ENCODE measurements at regions of chr6 and their contacts with region 1.

Region 1: GRCh38 chr6:119313937-119314884 is 35.4 kb downstream of the MAN1A1 start:
- DNase-seq: peak; percentile 91
- ATAC-seq: peak; percentile 71
- H3K4me3 Mint-ChIP-seq: peak overlapping the region; percentile 70
- H3K27ac Mint-ChIP-seq: peak overlapping the region; percentile 97
- H3K4me1 Mint-ChIP-seq: peaks cover 86% of the 10 kb centered on the region
- H3K27me3 Mint-ChIP-seq: no peaks in the 10 kb centered on the region

Region 2: DNA sequence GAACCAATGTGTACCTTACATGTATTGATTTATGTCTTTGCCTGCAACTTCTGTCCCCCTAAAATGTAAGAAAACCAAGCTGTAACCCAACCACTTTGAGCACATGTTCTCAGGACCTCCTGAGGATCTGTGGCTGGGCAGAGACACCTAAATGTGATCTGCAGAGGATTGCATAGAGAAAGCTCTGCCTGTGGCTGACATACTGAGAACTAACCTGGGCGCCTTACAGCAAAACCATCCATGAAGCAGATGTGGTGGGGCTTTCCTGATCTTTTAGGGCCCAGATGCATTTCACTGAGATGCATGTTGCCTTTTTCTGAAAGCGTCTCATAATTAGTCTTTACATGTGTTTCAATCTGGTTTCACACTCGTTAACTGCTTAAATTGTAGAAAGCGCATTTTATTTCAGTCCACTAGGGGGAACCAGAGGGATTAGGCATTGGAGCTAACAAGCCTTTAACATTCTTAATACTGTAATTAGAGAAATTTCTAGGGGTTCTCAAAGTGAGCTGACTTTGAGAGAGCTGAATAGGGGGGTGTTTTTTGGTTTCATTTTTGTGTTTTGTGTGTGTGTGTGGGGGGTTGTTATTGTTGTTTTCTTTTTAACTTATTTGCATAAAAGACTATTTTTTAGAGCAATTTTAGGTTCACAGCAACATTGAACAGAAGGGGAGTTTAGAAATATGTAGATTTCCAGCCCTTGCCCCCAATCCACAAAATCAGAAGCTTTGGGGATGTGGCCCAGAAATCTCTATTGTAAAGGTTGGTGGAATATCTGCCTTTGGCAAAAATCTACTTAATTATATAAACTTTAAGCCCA is 184.9 kb before region 1 on chr6:
- CTCF ChIA-PET with region 1: interaction called, 15 read pairs
- DNase-seq: no peak
- ATAC-seq: peak; percentile 76
- H3K4me3 Mint-ChIP-seq: no peak overlapping the region
- H3K27ac Mint-ChIP-seq: no peak overlapping the region
- H3K4me1 Mint-ChIP-seq: peaks cover 8% of the 10 kb centered on the region
- H3K27me3 Mint-ChIP-seq: peaks cover 2% of the 10 kb centered on the region

Region 3: DNA sequence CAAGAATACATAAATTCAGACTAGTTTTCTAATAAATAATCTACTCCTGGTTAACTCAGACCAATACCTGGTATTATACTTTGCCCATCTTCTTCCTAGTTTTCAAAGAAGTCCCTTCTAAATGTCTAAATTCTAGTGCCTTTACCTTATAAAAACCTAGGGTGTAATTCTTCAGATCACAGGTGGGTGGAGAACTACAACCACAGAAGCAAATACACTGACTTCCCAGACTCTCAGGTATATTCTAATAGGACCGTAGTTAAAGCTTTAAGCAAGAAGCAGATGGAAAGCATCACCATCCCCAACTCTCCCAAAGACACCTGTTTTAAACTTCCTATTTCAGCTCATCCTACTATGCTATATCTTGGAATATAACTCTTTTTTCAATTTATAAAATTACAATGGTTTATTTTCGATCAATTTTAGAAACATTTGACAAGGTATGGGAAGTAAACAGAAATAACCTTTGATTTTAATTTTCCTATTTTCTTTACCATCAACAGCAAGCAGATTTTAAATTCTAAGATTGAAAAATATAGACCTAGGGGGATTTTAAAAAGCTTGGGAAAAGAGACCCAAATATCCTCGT is 19.6 kb after region 1 on chr6:
- CTCF ChIA-PET with region 1: interaction called, 18 read pairs
- DNase-seq: no peak
- ATAC-seq: peak; percentile 54
- H3K4me3 Mint-ChIP-seq: no peak overlapping the region
- H3K27ac Mint-ChIP-seq: no peak overlapping the region
- H3K4me1 Mint-ChIP-seq: peaks cover 76% of the 10 kb centered on the region
- H3K27me3 Mint-ChIP-seq: no peaks in the 10 kb centered on the region

Region 4: DNA sequence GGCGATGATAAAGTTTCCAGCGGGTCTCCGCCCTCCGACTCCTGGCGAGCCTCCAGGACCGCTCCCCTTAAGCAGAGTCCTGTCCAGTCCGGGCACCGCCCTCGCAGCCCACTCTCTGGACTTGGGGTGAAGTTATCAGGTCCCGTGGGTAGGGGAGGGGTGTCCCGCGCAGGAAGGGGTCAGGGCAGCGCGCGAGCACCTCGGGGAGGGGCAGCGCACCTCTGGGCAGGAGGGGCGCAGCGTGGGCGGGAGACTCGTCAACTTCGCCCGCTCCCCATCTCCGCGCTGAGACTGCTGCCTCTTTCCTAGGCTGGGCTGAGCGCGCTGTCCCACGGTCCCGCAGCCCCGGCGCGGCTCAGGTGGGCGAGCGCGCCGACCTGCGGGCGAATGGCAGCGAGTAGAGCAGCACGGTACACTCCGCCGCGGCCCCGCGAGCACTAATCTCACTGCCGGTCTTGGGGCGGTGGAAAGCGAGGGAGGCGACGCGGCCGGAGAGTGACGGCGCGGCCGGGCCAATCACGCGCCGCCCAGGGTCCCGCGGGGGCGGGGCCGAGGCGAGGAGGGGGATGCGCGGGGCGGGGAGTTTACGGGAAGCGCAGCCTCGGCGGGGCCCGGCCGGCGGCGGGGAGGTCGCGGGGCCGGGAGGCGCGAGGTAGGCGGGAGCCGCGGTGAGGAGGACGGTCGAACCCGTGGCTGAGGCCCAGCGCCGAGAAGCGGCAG is 35.3 kb after region 1 on chr6 and contains the start of gene MAN1A1:
- CTCF ChIA-PET with region 1: interaction called, 26 read pairs
- DNase-seq: peak; percentile 92
- ATAC-seq: peak; percentile 87
- H3K4me3 Mint-ChIP-seq: peak within 1 kb of the TSS; percentile 91
- H3K27ac Mint-ChIP-seq: peak within 1 kb of the TSS; percentile 89
- H3K4me1 Mint-ChIP-seq: peaks cover 41% of the 10 kb centered on the region
- H3K27me3 Mint-ChIP-seq: no peaks in the 10 kb centered on the region
- total RNA-seq, gene MAN1A1: 34.8 to 38.4 TPM

Measured in activated CD8-positive, alpha-beta memory T cell treated with anti-CD3 and anti-CD28 coated beads, Interleukin-2, amount 10 ng/mL, durations not matched to agents 7 days and 5 days (primary cell).